Psoas muscle (tissue), 8 donors: ENCODE measurements at regions of chr7 and their contacts with region 1.

Region 1: GRCh38 chr7:157357129-157358040 is 20.6 kb downstream of the DNAJB6 start:
- DNase-seq: no peak
- ATAC-seq: no peak
- H3K4me3 ChIP-seq: peak overlapping the region; percentile 35
- H3K27ac ChIP-seq: peak overlapping the region; percentile 89
- H3K4me1 ChIP-seq: peaks cover 91% of the 10 kb centered on the region
- H3K27me3 ChIP-seq: no peaks in the 10 kb centered on the region
- CTCF ChIP-seq: no peak

Region 2: DNA sequence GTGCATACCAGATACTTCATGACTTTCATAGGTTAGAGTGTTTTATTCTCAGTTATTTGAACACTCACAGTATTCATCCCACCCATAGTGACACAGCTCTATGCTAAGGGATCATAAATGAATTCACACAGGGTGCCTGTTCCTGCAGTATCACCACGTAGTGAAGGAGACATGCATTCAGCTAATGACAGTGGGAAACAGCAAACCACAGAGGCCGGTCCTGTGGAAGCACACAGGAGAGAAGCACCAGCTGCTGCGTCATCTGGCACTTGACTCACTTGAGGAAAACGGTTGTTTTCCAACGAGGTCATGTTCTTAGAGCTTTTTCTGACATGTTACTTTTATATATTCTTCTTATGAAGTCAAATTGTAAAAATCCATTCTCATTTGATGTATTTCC is 145.7 kb before region 1 on chr7:
- intact Hi-C with region 1: no loop called
- DNase-seq: no peak
- ATAC-seq: no peak
- H3K4me3 ChIP-seq: no peak overlapping the region
- H3K27ac ChIP-seq: no peak overlapping the region
- H3K4me1 ChIP-seq: no peaks in the 10 kb centered on the region
- H3K27me3 ChIP-seq: no peaks in the 10 kb centered on the region
- CTCF ChIP-seq: no peak

Region 3: GRCh38 chr7:157309990-157310668 is 47.3 kb before region 1 on chr7:
- intact Hi-C with region 1: no loop called
- DNase-seq: no peak
- ATAC-seq: no peak
- H3K4me3 ChIP-seq: no peak overlapping the region
- H3K27ac ChIP-seq: no peak overlapping the region
- H3K4me1 ChIP-seq: no peaks in the 10 kb centered on the region
- H3K27me3 ChIP-seq: no peaks in the 10 kb centered on the region
- CTCF ChIP-seq: no peak

Region 4: GRCh38 chr7:157389991-157390730 is 32.8 kb after region 1 on chr7:
- intact Hi-C with region 1: loop called (anchors 5 kb)
- DNase-seq: no peak
- ATAC-seq: peak in 3 of 4 donors; percentile 20 to 28 (median 25)
- H3K4me3 ChIP-seq: no peak overlapping the region
- H3K27ac ChIP-seq: peak overlapping the region; percentile 58
- H3K4me1 ChIP-seq: peaks cover 49% of the 10 kb centered on the region
- H3K27me3 ChIP-seq: no peaks in the 10 kb centered on the region
- CTCF ChIP-seq: no peak

Region 5: GRCh38 chr7:157397731-157398691 is 40.6 kb after region 1 on chr7:
- intact Hi-C with region 1: loop called (anchors 5 kb)
- DNase-seq: peak; percentile 51 to 87
- ATAC-seq: peak; percentile 72 to 86 (median 80)
- H3K4me3 ChIP-seq: peak overlapping the region; percentile 11
- H3K27ac ChIP-seq: peak overlapping the region; percentile 86
- H3K4me1 ChIP-seq: peaks cover 54% of the 10 kb centered on the region
- H3K27me3 ChIP-seq: no peaks in the 10 kb centered on the region
- CTCF ChIP-seq: peak; percentile 39